ENCODE measurements at regions of chr6 and their contacts with region 1.

Region 1: GRCh38 chr6:122381497-122382265 is 17.8 kb upstream of the HSF2 start:
- DNase-seq: peak in 1 of 2 experiments; percentile 29
- H3K4me3 ChIP-seq: no peak overlapping the region; a peak in 1 of 8 replicates
- H3K27ac ChIP-seq: no peak overlapping the region
- H3K4me1 ChIP-seq: no peaks in the 10 kb centered on the region
- H3K27me3 ChIP-seq: peaks cover 0 to 1% (median 0%) of the 10 kb centered on the region in 4 experiments; a peak in 2 of 7 replicates
- CTCF ChIP-seq: peak; percentile 36 to 76 (median 69)
- EP300 ChIP-seq: peak in 1 of 2 experiments; percentile 75; a peak in 1 of 3 replicates
- POLR2A ChIP-seq: no peak
- RAD21 ChIP-seq: peak; percentile 76 to 78

Region 2: GRCh38 chr6:122393351-122393896 is 11.7 kb after region 1 on chr6:
- CTCF ChIA-PET with region 1: interaction called, 18 read pairs
- POLR2A ChIA-PET with region 1: interaction called, 3 read pairs
- DNase-seq: no peak
- H3K4me3 ChIP-seq: no peak overlapping the region
- H3K27ac ChIP-seq: no peak overlapping the region
- H3K4me1 ChIP-seq: peaks cover 0 to 6% (median 0%) of the 10 kb centered on the region in 4 experiments; a peak in 1 of 7 replicates
- H3K27me3 ChIP-seq: peaks cover 37 to 87% (median 73%) of the 10 kb centered on the region in 4 experiments
- CTCF ChIP-seq: no peak
- EP300 ChIP-seq: no peak
- POLR2A ChIP-seq: no peak
- RAD21 ChIP-seq: no peak

Region 3: DNA sequence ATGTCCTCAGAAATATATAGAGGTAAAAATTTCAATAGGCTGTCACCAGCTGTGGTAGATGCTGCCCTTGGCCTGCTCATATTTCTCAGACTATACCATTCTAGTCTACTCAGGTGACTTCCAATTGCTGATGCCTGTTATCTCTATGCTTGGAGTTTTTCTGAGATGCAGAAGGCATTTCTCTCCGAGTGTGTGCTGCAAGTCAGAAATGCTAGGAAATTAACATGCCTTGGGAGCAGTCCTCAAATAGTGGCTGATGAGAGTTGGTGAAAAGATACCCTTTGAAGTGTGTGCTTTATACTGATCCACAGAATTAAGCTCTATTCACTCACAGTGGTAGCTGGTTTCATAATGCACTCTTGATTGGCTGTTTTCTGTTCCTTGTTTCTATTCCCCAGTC is 185.4 kb after region 1 on chr6:
- CTCF ChIA-PET with region 1: no interaction called
- POLR2A ChIA-PET with region 1: no interaction called
- DNase-seq: no peak
- H3K4me3 ChIP-seq: no peak overlapping the region
- H3K27ac ChIP-seq: no peak overlapping the region
- H3K4me1 ChIP-seq: peaks cover 0 to 5% (median 2%) of the 10 kb centered on the region in 4 experiments; a peak in 1 of 7 replicates
- H3K27me3 ChIP-seq: no peaks in the 10 kb centered on the region
- CTCF ChIP-seq: no peak
- EP300 ChIP-seq: no peak
- POLR2A ChIP-seq: no peak
- RAD21 ChIP-seq: no peak

Measured in H1 (cell line).